ENCODE measurements at regions of chr6 and their contacts with region 1.

Region 1: GRCh38 chr6:108848116-108848868 is at the start of gene ARMC2:
- DNase-seq: peak; percentile 90 to 96
- H3K4me3 ChIP-seq: peak within 1 kb of the TSS; percentile 63 to 74
- H3K27ac ChIP-seq: peak within 1 kb of the TSS; percentile 75 to 79
- H3K4me1 ChIP-seq: no peaks in the 10 kb centered on the region
- H3K27me3 ChIP-seq: no peaks in the 10 kb centered on the region
- CTCF ChIP-seq: peak in 1 of 4 experiments; percentile 3
- POLR2A ChIP-seq: peak; percentile 70 to 74
- total RNA-seq, gene ARMC2: 5.1 to 15.1 (median 9.1) TPM in 3 of 4 donors, not detected in the other

Region 2: GRCh38 chr6:109095027-109095834 is 246.9 kb after region 1 on chr6 and contains the start of gene CEP57L1:
- intact Hi-C with region 1: loop called (anchors 10 kb)
- DNase-seq: peak; percentile 93 to 97
- H3K4me3 ChIP-seq: peak within 1 kb of the TSS; percentile 79 to 88
- H3K27ac ChIP-seq: peak within 1 kb of the TSS; percentile 98 to 99
- H3K4me1 ChIP-seq: no peaks in the 10 kb centered on the region
- H3K27me3 ChIP-seq: no peaks in the 10 kb centered on the region
- CTCF ChIP-seq: peak in 1 of 4 experiments; percentile 16
- POLR2A ChIP-seq: peak in 1 of 2 donors; percentile 33
- total RNA-seq, gene CEP57L1: 5.6 to 52.7 (median 17.5) TPM